OCI-LY7 (cell line): ENCODE measurements at regions of chr6 and their contacts with region 1.

Region 1: GRCh38 chr6:113018351-113019151 is 671.4 kb downstream of the RFPL4B start:
- DNase-seq: no peak
- H3K4me3 ChIP-seq: no peak overlapping the region
- H3K27ac ChIP-seq: no peak overlapping the region
- H3K4me1 ChIP-seq: no peaks in the 10 kb centered on the region
- CTCF ChIP-seq: no peak

Region 2: GRCh38 chr6:112931832-112932231 is 86.7 kb before region 1 on chr6:
- CTCF ChIA-PET with region 1: no interaction called
- POLR2A ChIA-PET with region 1: no interaction called
- intact Hi-C with region 1: no loop called
- DNase-seq: no peak
- H3K4me3 ChIP-seq: no peak overlapping the region
- H3K27ac ChIP-seq: no peak overlapping the region
- H3K4me1 ChIP-seq: no peaks in the 10 kb centered on the region
- CTCF ChIP-seq: no peak

Region 3: GRCh38 chr6:113481458-113481857 is 462.9 kb after region 1 on chr6:
- CTCF ChIA-PET with region 1: no interaction called
- POLR2A ChIA-PET with region 1: no interaction called
- intact Hi-C with region 1: loop called (anchors 5 kb)
- DNase-seq: no peak
- H3K4me3 ChIP-seq: no peak overlapping the region
- H3K27ac ChIP-seq: no peak overlapping the region
- H3K4me1 ChIP-seq: no peaks in the 10 kb centered on the region
- CTCF ChIP-seq: no peak